ENCODE measurements at regions of chr17 and their contacts with region 1.

Region 1: GRCh38 chr17:77494664-77495435 is 354.1 kb downstream of the SEC14L1 start:
- DNase-seq: no peak
- H3K4me3 ChIP-seq: no peak overlapping the region
- CTCF ChIP-seq: peak; percentile 87

Region 2: DNA sequence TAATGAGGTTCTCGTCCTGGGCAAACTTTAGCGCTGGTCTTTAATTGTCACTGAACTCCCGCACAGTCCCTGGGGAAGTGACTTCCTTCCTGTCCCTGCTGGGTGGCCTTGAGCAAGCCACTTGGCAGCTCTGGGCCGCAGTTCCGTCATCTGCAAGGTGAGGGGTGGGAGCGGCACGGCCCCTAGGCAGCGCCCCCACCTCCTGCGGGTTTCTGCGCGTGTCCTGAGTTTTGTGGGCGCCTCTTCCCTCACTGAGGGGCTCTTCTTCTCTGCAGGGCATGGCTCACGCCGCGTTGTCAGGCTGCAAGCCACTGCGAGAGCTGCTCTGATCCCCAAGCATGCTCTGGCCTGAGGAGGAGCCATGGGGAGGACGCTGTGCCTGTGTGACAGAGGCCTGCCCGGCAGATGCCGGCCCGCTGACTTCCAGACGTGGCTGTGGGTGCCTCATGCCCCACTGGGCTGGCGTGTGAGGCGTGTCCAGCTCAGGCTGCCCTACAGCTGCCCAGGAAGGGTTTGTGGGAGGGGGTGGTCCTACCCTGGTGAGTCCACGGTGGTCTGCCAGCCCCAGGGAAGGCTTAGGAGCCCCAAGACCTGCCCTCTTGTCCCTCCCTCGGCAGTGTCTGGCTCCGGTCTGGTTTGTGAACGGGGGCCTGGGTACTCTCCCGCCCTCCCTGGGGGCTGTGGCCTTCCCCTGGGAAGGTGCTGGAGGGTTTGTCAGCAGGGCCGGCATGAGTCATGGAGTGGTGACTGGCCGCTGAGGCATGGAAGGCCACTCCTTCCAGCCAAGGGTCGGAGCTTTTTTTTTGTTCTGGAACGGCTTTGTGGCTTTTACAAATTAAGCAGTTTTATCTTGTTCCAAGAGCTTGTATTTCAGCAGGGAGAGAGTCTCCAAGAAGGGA is 172.1 kb before region 1 on chr17:
- CTCF ChIA-PET with region 1: interaction called, 11 read pairs
- POLR2A ChIA-PET with region 1: no interaction called
- DNase-seq: peak; percentile 97
- H3K4me3 ChIP-seq: peak overlapping the region; percentile 72
- CTCF ChIP-seq: no peak

Region 3: DNA sequence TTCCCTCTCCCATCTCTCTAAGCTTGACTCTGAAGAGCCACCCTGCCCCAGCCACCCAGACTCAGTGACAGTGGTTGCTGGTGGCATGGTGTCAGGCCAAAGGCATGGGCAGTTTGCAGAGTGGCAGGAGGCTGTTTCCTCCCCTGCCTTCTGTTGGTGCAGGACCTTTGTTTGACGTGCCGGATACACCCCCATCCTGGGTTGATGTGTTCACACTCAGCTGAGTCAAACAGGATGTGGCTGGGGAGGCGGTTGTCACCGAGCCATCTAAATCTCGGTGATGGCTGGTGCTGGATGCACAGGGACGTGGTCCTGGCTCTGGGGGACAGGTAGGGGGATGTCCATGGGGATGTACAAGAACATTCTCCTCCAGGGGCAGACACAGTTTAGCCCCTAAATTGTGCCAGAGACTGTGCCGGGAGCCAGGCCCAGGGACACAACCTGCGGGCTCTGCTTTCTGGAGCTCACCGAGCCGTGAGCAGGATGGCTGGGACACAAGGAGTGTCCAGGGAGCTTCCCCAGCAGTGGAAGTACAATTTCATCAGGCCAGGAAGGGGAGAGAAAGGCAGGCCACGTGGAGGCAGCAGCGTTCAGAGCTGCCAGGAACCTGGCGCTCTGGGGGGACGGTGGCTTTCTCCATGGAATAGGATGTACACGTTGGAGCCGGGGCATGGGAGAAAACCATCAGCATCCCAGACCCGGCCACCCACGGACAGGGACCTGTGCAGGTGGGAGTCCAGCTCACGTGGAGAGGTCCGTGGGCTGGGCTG is 89.9 kb before region 1 on chr17:
- CTCF ChIA-PET with region 1: interaction called, 24 read pairs
- POLR2A ChIA-PET with region 1: no interaction called
- DNase-seq: peak; percentile 33
- H3K4me3 ChIP-seq: no peak overlapping the region
- CTCF ChIP-seq: no peak

Region 4: DNA sequence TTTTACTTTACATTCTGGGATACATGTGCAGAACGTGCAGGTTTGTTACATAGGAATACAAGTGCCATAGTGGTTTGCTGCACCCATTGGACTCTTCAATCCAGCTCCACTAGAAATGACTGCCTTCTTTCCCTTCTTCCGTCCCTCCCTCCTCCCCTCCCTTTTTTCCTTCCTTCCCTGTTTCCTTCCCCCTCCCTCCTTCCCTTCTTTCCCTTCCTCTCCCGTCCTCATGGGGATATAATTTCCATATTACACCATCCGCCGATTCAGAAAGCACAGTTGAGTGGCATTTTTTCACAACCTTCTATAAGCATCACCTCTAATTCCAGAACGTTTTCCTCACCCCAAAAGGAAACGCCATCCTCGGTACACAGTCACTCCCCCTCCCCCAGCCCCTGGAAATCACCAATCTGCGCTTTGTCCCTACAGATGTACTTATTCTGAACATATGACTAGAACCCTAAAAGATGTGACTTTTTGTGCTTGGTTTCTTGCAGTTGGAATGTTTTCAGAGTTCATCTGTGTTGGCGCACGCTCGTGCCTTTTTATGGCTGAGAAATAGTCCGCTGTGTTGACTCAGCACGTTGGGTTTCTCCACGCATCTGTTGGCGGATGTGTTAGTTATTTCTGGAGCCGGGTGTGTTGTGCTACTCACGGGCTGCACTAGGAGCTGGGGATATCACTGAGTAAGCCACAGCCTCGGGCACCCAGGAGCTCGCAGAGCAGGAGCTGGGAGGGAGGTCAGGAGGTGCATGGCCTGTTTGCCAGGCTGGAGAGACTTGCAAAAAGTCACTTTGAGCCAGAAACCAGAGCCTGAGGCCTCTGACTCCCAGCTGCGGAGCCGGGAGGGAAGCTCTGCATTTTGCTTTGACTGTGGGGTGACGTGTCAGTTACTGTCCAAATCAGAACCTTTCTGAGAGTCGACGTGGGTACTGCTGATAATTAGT is 17.6 kb before region 1 on chr17:
- CTCF ChIA-PET with region 1: interaction called, 17 read pairs
- POLR2A ChIA-PET with region 1: no interaction called
- DNase-seq: peak; percentile 95
- H3K4me3 ChIP-seq: peak overlapping the region; percentile 25; the same call in 1 of the 2 replicates
- CTCF ChIP-seq: no peak

Region 5: DNA sequence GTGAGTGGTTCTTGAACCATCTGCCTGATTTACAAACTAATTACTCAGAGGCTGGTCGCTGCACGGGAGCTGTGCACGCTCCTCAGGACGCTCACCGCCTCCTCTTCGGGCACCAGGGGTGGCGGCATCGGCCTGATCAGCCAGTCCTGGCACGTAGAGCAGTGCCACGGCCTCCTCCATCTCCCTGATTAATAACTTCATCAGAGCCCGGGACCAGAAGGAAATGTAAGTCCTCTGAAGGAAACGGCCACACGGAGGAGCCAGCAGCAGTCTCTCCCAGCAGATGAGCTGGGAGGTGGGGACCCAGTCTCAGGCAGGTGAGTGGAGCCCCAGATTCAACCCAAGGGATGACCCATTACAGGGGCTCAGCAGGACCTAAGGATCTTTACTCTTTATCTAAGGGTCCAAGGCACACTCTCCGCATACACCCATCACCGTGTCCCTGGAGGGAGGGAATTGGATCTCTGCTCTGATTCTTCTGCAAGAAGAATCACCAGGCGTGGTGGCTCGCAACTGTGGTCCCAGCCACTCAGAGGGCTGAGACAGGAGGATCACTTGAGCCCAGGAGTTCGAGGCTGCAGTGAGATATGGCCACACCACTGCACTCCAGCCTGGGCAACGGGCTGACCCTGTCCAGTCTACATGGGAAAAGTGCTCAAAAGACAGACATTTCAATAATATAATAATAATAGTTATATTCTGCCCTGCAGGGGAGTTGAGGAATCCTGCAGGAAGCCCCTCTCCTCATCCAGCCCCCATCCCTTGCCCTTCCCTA is 12.4 kb after region 1 on chr17:
- CTCF ChIA-PET with region 1: interaction called, 13 read pairs
- POLR2A ChIA-PET with region 1: no interaction called
- DNase-seq: no peak
- H3K4me3 ChIP-seq: no peak overlapping the region
- CTCF ChIP-seq: no peak

Region 6: DNA sequence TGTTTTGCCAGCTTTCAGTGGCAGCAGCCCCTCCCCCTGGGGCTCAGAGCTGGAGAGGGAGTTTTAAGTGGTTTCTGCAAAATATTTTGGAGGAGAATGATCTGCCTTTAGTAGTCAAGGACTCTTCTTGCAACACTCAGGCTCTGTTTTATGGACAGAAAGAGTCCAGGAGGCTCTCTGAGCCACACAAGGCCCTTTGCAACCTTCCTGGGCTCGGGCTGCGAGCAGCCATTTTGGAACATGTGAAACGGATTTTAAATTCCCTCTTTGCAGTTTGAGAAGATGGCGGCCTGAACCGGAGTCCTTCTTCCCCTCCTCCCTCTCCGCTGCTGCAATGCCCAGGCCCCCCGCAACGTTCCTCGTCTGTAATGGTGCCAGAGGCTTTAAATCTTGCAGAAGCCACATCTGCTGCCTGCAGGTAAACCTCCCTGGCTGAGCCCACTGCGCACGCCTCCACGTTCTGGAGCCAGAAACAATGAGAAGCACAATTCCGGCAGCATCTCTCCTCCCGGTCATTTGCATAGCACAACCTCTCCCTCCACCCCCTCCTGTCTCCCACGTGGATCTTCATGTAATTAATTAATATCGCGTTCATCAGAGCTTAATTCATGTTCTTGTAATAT is 32.0 kb after region 1 on chr17:
- CTCF ChIA-PET with region 1: no interaction called
- POLR2A ChIA-PET with region 1: no interaction called
- DNase-seq: no peak
- H3K4me3 ChIP-seq: no peak overlapping the region
- CTCF ChIP-seq: no peak

Region 7: DNA sequence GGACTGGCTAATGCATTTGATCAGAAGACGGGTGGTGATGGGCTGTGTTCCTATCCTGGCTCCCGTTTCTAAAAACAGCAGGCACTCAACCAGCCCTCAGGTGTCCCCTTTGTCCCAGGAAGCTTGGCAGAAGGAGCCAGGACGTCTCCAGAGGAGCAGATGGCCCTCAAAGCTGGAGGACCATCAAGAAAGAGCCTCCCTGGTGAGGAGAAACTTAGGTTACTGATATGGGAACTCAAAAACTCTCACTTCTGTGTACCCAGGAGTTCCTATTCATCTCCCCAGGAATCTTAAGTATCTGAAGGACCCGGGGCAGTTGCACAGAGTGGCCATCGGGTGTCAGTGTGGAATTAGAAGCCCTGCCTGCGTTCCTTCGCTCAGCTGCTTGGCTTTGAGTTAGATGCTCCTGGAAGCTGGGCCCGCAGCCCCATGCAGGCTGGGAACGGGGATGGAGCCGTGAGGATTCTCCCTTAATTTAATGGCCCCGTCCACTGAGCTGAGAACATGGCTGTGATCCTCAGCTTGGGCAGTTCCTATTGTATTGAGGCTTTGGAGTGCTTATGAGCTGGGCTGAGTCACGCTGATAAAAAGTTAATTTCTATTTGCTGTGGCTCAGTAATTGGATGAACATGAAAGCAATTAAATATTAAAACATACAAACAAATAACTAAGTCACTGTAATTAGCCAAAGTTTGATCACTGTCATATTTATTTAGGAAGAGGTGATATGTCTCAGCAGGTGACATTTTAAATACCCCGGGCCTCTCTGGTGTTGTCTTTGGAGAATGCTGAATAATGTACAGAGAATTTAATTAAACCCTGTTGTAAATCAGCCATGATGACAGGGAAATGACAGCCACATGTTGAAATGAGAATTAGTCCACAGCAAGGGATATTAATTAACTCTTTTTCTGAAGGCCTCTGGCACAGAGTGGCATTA is 48.0 kb after region 1 on chr17:
- CTCF ChIA-PET with region 1: no interaction called
- POLR2A ChIA-PET with region 1: no interaction called
- DNase-seq: peak; percentile 40
- H3K4me3 ChIP-seq: no peak overlapping the region
- CTCF ChIP-seq: peak; percentile 88

Region 8: GRCh38 chr17:77999413-78000173 is 504.7 kb after region 1 on chr17:
- CTCF ChIA-PET with region 1: no interaction called
- POLR2A ChIA-PET with region 1: no interaction called
- DNase-seq: no peak
- H3K4me3 ChIP-seq: no peak overlapping the region
- CTCF ChIP-seq: no peak